Pancreas (tissue), 10 donors: ENCODE measurements at regions of chr1 and their contacts with region 1.

Region 1: DNA sequence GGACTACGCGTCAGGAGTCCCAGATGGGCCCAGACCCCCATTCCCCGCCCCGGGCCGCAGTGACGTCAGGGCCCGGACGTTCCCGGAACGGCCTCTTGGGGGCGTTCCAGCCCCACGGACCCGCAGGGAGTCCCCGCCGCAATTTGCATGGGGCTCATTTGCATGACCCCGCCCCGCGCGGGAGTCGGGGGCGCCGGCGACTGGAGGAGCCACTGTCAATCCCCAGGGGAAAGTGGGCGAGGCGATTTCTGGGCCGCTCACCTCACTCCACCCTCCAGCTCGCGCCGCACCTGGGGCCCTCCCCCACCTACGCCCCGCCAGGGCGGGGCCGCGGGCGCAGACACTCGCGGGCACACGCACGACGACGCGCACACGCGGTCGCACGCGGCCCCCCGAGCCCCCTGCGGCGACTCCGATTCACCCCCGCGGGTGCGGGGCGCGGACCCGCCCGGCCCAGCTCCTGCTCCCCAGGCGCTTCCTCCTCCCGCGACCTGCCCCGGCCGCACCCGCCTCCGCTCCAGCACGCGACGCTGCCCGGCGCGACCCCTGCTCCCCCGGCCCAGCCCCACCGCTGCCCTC is 13.2 kb downstream of the AGRN start:
- DNase-seq: peak; percentile 88 to 94 (median 92)
- ATAC-seq: peak; percentile 89 to 96 (median 91)
- H3K4me3 ChIP-seq: peak overlapping the region in 3 of 4 donors; percentile 11 to 49 (median 42)
- H3K27ac ChIP-seq: no peak overlapping the region
- H3K4me1 ChIP-seq: peaks cover 0 to 4% (median 0%) of the 10 kb centered on the region in 3 donors
- H3K27me3 ChIP-seq: no peaks in the 10 kb centered on the region
- CTCF ChIP-seq: peak; percentile 58 to 77 (median 67)

Region 2: DNA sequence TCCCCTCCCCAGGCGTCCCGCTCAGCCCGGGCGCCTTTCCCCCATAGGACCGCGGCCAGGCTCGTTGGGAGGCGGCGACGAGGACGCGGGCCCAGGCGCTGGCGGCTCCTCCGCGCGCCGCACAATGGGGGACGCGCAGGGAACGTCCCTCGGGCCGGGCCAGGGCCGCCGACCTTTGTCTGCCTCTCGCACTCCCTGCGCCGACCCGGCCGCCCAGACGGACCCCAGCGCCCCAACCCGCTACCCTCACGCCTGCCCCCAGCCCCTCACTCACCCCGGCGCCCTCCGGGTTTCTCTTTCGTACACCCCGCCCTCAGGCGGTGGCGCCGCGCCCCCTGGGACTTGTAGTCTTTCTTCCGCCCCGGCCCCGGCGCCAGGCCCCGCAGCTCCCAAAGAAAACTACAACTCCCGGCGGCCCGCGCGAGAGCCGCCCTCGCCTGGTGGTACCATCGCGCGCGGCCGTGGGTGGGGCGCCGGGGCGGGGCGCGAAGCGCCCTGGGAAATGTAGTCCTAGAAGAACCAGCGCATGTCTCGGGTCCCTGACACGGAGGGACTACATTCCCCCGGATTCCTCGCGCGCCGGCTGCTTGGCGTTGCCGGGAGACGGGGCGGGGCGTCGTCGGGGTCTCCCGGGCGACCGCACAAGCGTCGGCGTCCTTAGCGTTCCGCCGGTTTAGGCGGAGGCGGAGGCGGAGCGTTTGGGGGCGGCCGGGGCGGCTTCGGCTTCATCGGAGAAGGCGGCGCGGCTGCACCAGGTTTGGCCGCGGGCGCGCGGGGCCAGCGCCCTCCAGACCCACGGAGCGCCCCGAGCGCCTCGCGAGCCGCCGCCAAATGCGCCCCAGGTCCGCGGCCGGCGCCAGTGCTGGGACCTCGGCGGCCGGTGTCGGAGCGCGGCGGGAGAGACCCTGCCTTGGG is 82.9 kb after region 1 on chr1 and contains the start of gene C1orf159:
- intact Hi-C with region 1: loop called in 1 of 3 experiments (anchors 10 kb)
- DNase-seq: peak; percentile 98 to 100 (median 99)
- ATAC-seq: peak; percentile 96 to 99 (median 98)
- H3K4me3 ChIP-seq: peak within 1 kb of the TSS; percentile 77 to 87 (median 85)
- H3K27ac ChIP-seq: peak within 1 kb of the TSS in 3 of 4 donors; percentile 28 to 47 (median 44)
- H3K4me1 ChIP-seq: no peaks in the 10 kb centered on the region
- H3K27me3 ChIP-seq: no peaks in the 10 kb centered on the region
- CTCF ChIP-seq: no peak
- total RNA-seq, gene C1orf159: 3.0 to 6.7 (median 4.0) TPM